CD8-positive, alpha-beta T cell (primary cell): ENCODE measurements at regions of chr10 and their contacts with region 1.

Region 1: DNA sequence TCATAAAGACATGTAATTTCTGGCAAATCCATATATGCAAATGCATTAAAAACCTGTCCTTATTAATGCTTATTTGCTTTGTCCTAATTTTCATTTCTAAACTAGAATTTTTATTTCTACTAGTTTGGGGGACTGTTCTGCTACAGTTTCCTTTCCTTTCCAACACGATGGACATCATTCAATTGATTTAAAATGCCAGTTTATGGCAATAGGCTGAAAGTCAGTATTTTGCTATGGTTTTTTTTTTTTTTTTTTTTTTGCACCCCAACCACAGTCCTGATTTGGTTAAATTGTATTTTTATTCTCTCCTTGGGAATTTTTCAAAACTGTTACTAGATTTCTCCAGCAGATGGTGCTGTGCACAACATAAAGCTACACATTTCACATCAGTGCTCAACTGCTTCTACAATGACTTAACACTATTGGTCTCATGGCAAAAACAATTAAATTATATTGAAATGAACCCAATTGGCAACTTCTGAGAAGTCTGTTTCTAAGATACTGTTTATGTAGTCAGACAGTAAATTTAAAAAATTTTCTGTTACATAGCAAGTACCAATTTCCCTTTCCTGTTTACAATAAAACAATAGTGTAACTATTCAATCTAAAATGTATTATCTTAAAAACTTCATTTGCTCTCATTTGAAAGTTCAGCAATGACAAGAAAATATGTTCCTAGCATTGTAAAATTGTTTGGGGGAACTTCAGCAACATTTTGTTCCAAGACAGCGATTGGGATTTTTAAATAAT is 193.8 kb upstream of the CCDC6 start:
- DNase-seq: peak in 2 of 9 experiments; percentile 40 to 60
- ATAC-seq: peak; percentile 29
- H3K4me3 ChIP-seq: no peak overlapping the region
- H3K4me3 Mint-ChIP-seq: no peak overlapping the region
- H3K27ac ChIP-seq: no peak overlapping the region
- H3K27ac Mint-ChIP-seq: no peak overlapping the region
- H3K4me1 ChIP-seq: no peaks in the 10 kb centered on the region
- H3K4me1 Mint-ChIP-seq: no peaks in the 10 kb centered on the region
- H3K27me3 ChIP-seq: no peaks in the 10 kb centered on the region
- H3K27me3 Mint-ChIP-seq: no peaks in the 10 kb centered on the region
- CTCF ChIP-seq: peak; percentile 74

Region 2: GRCh38 chr10:60434418-60435046 is 334.4 kb after region 1 on chr10:
- CTCF ChIA-PET with region 1: no interaction called
- POLR2A ChIA-PET with region 1: no interaction called
- intact Hi-C with region 1: loop called (anchors 10 kb)
- DNase-seq: peak in 2 of 9 experiments; percentile 9 to 22
- ATAC-seq: no peak
- H3K4me3 ChIP-seq: no peak overlapping the region
- H3K4me3 Mint-ChIP-seq: no peak overlapping the region
- H3K27ac ChIP-seq: no peak overlapping the region
- H3K27ac Mint-ChIP-seq: no peak overlapping the region
- H3K4me1 ChIP-seq: no peaks in the 10 kb centered on the region
- H3K4me1 Mint-ChIP-seq: no peaks in the 10 kb centered on the region
- H3K27me3 ChIP-seq: no peaks in the 10 kb centered on the region
- H3K27me3 Mint-ChIP-seq: no peaks in the 10 kb centered on the region
- CTCF ChIP-seq: no peak

Region 3: GRCh38 chr10:60646966-60647796 is 547.0 kb after region 1 on chr10:
- CTCF ChIA-PET with region 1: interaction called, 4 read pairs
- POLR2A ChIA-PET with region 1: no interaction called
- intact Hi-C with region 1: loop called (anchors 1 to 2 kb)
- DNase-seq: peak in 6 of 9 experiments; percentile 10 to 65 (median 34)
- ATAC-seq: no peak
- H3K4me3 ChIP-seq: no peak overlapping the region
- H3K4me3 Mint-ChIP-seq: no peak overlapping the region
- H3K27ac ChIP-seq: no peak overlapping the region
- H3K27ac Mint-ChIP-seq: no peak overlapping the region
- H3K4me1 ChIP-seq: no peaks in the 10 kb centered on the region
- H3K4me1 Mint-ChIP-seq: peaks cover 2% of the 10 kb centered on the region
- H3K27me3 ChIP-seq: no peaks in the 10 kb centered on the region
- H3K27me3 Mint-ChIP-seq: peaks cover 4% of the 10 kb centered on the region
- CTCF ChIP-seq: peak; percentile 88

Region 4: DNA sequence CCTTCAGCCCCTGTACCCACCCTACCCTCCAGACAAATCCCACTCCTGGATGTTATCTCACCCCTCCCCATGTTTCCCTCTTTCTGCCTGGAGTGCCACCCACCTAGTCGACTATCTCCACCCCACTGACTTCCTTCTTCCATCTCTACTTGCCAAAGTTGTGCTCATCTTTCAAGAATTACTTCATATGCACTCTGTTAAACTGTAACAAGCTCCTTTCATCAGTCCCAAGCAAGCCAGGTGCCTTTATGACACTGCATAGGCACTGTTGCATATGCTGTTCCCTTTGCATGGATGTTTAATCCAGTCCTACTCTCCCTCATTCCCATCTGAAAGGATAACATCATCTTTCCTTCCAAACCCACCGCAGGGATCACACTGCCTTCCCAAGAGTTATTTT is 669.2 kb after region 1 on chr10:
- CTCF ChIA-PET with region 1: no interaction called
- POLR2A ChIA-PET with region 1: no interaction called
- intact Hi-C with region 1: loop called (anchors 2 to 5 kb)
- DNase-seq: no peak
- ATAC-seq: no peak
- H3K4me3 ChIP-seq: no peak overlapping the region
- H3K4me3 Mint-ChIP-seq: no peak overlapping the region
- H3K27ac ChIP-seq: no peak overlapping the region
- H3K27ac Mint-ChIP-seq: no peak overlapping the region
- H3K4me1 ChIP-seq: no peaks in the 10 kb centered on the region
- H3K4me1 Mint-ChIP-seq: no peaks in the 10 kb centered on the region
- H3K27me3 ChIP-seq: no peaks in the 10 kb centered on the region
- H3K27me3 Mint-ChIP-seq: no peaks in the 10 kb centered on the region
- CTCF ChIP-seq: no peak

Region 5: DNA sequence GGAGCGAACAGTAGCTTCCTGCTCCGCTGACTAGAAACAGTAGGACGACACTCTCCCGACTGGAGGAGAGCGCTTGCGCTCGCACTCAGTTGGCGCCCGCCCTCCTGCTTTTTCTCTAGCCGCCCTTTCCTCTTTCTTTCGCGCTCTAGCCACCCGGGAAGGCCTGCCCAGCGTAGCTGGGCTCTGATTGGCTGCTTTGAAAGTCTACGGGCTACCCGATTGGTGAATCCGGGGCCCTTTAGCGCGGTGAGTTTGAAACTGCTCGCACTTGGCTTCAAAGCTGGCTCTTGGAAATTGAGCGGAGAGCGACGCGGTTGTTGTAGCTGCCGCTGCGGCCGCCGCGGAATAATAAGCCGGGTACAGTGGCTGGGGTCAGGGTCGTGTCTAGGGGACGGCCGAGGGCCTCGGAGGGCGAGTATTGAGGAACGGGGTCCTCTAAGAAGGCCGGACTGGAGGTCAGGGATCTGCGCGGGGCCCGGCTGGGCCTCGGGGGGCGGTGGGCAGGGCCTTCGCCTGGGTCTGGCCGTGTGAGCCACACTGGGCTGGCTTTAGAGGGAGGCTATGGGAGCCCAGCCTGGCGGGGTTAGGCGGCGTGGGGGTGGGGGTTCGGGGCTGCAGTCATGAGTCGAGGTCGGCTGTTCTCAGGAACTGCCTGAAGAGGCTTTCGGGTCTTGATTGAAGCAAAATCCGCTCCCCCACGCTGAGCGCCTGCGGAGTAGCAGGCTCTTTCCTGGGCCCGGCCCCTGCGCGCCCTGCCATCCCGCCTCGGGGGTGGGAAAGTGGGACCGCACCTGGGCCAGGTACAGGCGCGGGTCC is 678.2 kb after region 1 on chr10 and contains the start of gene CDK1:
- CTCF ChIA-PET with region 1: no interaction called
- POLR2A ChIA-PET with region 1: no interaction called
- intact Hi-C with region 1: loop called in 1 of 2 experiments (anchors 5 kb)
- DNase-seq: peak; percentile 86 to 96 (median 94)
- ATAC-seq: peak; percentile 97
- H3K4me3 ChIP-seq: peak within 1 kb of the TSS; percentile 70 to 77
- H3K4me3 Mint-ChIP-seq: peak within 1 kb of the TSS; percentile 96
- H3K27ac ChIP-seq: no peak within 1 kb of the TSS
- H3K27ac Mint-ChIP-seq: peak within 1 kb of the TSS; percentile 81
- H3K4me1 ChIP-seq: no peaks in the 10 kb centered on the region
- H3K4me1 Mint-ChIP-seq: peaks cover 13% of the 10 kb centered on the region
- H3K27me3 ChIP-seq: no peaks in the 10 kb centered on the region
- H3K27me3 Mint-ChIP-seq: peaks cover 3% of the 10 kb centered on the region
- CTCF ChIP-seq: no peak
- total RNA-seq, gene CDK1: 0.31 to 1.6 TPM

Region 6: GRCh38 chr10:60964257-60965235 is 864.4 kb after region 1 on chr10:
- CTCF ChIA-PET with region 1: no interaction called
- POLR2A ChIA-PET with region 1: no interaction called
- intact Hi-C with region 1: loop called in 1 of 2 experiments (anchors 2 kb)
- DNase-seq: peak in 6 of 9 experiments; percentile 20 to 60 (median 40)
- ATAC-seq: peak; percentile 51
- H3K4me3 ChIP-seq: no peak overlapping the region
- H3K4me3 Mint-ChIP-seq: no peak overlapping the region
- H3K27ac ChIP-seq: no peak overlapping the region
- H3K27ac Mint-ChIP-seq: no peak overlapping the region
- H3K4me1 ChIP-seq: no peaks in the 10 kb centered on the region
- H3K4me1 Mint-ChIP-seq: no peaks in the 10 kb centered on the region
- H3K27me3 ChIP-seq: no peaks in the 10 kb centered on the region
- H3K27me3 Mint-ChIP-seq: peaks cover 9% of the 10 kb centered on the region
- CTCF ChIP-seq: peak; percentile 65

Region 7: GRCh38 chr10:61284222-61284890 is 1184.2 kb after region 1 on chr10:
- CTCF ChIA-PET with region 1: no interaction called
- POLR2A ChIA-PET with region 1: no interaction called
- intact Hi-C with region 1: loop called in 1 of 2 experiments (anchors 10 kb)
- DNase-seq: peak in 2 of 9 experiments; percentile 51 to 62
- ATAC-seq: no peak
- H3K4me3 ChIP-seq: no peak overlapping the region
- H3K4me3 Mint-ChIP-seq: peak overlapping the region; percentile 64
- H3K27ac ChIP-seq: no peak overlapping the region
- H3K27ac Mint-ChIP-seq: no peak overlapping the region
- H3K4me1 ChIP-seq: peaks cover 15% of the 10 kb centered on the region
- H3K4me1 Mint-ChIP-seq: peaks cover 24% of the 10 kb centered on the region
- H3K27me3 ChIP-seq: no peaks in the 10 kb centered on the region
- H3K27me3 Mint-ChIP-seq: no peaks in the 10 kb centered on the region
- CTCF ChIP-seq: peak; percentile 92